ENCODE measurements at regions of chr5 and their contacts with region 1.

Region 1: DNA sequence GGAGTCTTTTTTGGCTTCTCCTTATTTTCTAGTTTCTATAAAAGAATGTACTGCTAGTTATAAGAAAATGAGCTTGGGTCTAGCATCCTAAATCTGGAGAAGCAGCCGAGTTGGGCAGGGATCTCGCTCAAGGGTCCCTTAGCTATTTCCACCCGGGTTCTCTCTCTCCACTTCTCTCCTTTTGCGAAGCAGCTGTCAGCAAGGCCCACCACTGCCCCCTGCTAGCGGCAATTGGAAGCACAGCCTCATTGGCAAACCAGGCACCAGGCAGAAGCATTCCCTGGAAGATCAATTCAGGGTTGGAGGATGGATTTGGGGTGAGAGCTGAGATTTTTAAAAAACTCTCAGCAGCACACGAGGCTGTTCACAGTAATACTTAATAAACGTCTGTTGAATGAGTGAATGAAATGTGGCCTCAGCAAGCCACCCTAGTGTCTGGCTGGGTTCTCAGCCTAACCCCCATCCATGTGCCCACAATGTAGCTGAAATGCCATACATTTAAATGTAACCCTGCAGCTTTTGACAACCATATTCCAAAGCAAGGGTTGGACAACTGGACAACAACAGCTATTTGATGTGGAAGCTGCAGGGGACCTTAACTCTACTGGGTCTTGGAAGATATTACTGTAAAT is 34.6 kb upstream of the TNIP1 start:
- DNase-seq: peak; percentile 84
- ATAC-seq: peak; percentile 76
- H3K4me3 Mint-ChIP-seq: no peak overlapping the region
- H3K27ac Mint-ChIP-seq: peak overlapping the region; percentile 24
- H3K4me1 Mint-ChIP-seq: peaks cover 2% of the 10 kb centered on the region
- H3K27me3 Mint-ChIP-seq: no peaks in the 10 kb centered on the region

Region 2: DNA sequence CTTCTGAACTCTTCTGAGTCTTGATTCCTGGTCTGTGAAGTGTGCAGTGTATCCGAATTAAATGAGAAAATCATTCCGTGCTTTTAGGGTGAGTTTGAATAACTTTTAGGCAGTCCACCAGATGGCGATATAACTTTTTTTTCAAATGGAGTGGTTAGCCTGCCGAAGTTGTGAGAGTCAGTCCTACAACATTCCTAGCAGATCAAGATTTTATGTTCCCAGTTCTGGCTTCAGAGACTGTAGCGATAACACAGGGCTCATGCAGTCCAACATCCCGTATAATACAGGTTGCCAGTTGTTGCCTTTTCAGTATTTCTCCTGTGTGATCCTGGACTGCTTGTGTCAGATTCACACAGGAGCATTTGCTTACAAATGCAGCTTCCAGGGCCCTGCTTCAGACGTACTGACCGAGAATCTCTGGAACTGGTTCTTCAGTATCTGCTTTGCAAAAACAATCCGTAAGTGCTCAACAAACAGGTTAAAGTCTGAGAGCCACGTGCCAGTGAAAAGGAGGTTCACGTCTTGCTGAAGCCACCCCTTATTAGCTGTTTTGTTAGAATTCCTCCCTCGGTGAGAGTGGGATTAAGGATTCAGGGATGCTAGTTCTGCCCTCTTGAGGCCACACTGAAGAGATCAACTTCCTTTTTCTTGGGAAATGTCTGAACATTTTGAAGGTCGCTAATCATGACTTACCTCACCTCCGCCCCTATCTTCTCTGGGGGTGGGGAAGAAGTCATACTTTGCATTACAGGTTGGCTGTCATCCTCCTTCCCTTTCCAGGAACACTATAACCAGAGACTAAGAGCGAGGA is 314.1 kb before region 1 on chr5:
- CTCF ChIA-PET with region 1: interaction called, 9 read pairs
- POLR2A ChIA-PET with region 1: no interaction called
- intact Hi-C with region 1: loop called in 1 of 2 experiments (anchors 2 kb)
- DNase-seq: peak; percentile 26
- ATAC-seq: peak; percentile 78
- H3K4me3 Mint-ChIP-seq: no peak overlapping the region
- H3K27ac Mint-ChIP-seq: no peak overlapping the region
- H3K4me1 Mint-ChIP-seq: peaks cover 22% of the 10 kb centered on the region
- H3K27me3 Mint-ChIP-seq: no peaks in the 10 kb centered on the region

Region 3: GRCh38 chr5:150912312-150912814 is 203.0 kb before region 1 on chr5:
- CTCF ChIA-PET with region 1: no interaction called
- POLR2A ChIA-PET with region 1: no interaction called
- intact Hi-C with region 1: no loop called
- DNase-seq: no peak
- ATAC-seq: no peak
- H3K4me3 Mint-ChIP-seq: no peak overlapping the region
- H3K27ac Mint-ChIP-seq: no peak overlapping the region
- H3K4me1 Mint-ChIP-seq: no peaks in the 10 kb centered on the region
- H3K27me3 Mint-ChIP-seq: peaks cover 7% of the 10 kb centered on the region

Region 4: DNA sequence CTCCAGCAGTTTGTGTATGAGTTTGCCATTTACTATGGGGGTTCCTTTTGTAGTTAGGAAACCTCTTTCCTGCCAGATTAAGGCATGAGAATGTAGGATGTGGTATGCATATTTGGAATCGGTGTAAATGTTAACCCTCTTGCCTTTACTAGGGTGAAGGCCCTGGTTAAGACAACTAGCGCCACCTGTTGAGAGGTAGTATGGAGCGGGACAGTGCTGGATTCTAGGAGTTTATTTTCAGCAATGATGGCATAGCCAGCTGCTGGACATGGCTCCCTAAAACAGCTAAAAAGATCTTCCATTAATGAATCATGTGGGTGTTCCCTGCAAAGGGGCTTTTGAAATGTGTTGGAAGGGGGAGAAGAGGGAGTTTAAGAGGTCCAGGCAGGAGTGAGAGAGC is 125.7 kb before region 1 on chr5:
- CTCF ChIA-PET with region 1: no interaction called
- POLR2A ChIA-PET with region 1: no interaction called
- intact Hi-C with region 1: no loop called
- DNase-seq: peak; percentile 46
- ATAC-seq: peak; percentile 74
- H3K4me3 Mint-ChIP-seq: no peak overlapping the region
- H3K27ac Mint-ChIP-seq: no peak overlapping the region
- H3K4me1 Mint-ChIP-seq: no peaks in the 10 kb centered on the region
- H3K27me3 Mint-ChIP-seq: no peaks in the 10 kb centered on the region

Region 5: GRCh38 chr5:151051066-151051930 is 64.1 kb before region 1 on chr5:
- CTCF ChIA-PET with region 1: interaction called, 234 read pairs
- POLR2A ChIA-PET with region 1: no interaction called
- intact Hi-C with region 1: loop called (anchors 1 kb)
- DNase-seq: peak; percentile 82
- ATAC-seq: peak; percentile 84
- H3K4me3 Mint-ChIP-seq: no peak overlapping the region
- H3K27ac Mint-ChIP-seq: no peak overlapping the region
- H3K4me1 Mint-ChIP-seq: peaks cover 5% of the 10 kb centered on the region
- H3K27me3 Mint-ChIP-seq: no peaks in the 10 kb centered on the region

Region 6: GRCh38 chr5:151080623-151081430 is 34.6 kb before region 1 on chr5 and contains the start of gene TNIP1:
- CTCF ChIA-PET with region 1: interaction called, 37 read pairs
- POLR2A ChIA-PET with region 1: no interaction called
- intact Hi-C with region 1: loop called in 1 of 2 experiments (anchors 2 kb)
- DNase-seq: peak; percentile 96
- ATAC-seq: peak; percentile 67
- H3K4me3 Mint-ChIP-seq: peak within 1 kb of the TSS; percentile 80
- H3K27ac Mint-ChIP-seq: peak within 1 kb of the TSS; percentile 91
- H3K4me1 Mint-ChIP-seq: peaks cover 74% of the 10 kb centered on the region
- H3K27me3 Mint-ChIP-seq: no peaks in the 10 kb centered on the region
- total RNA-seq, gene TNIP1: 351 to 408 TPM

Region 7: GRCh38 chr5:151104795-151105194 is 10.6 kb before region 1 on chr5:
- CTCF ChIA-PET with region 1: interaction called, 74 read pairs
- POLR2A ChIA-PET with region 1: no interaction called
- intact Hi-C with region 1: no loop called
- DNase-seq: no peak
- ATAC-seq: no peak
- H3K4me3 Mint-ChIP-seq: no peak overlapping the region
- H3K27ac Mint-ChIP-seq: no peak overlapping the region
- H3K4me1 Mint-ChIP-seq: no peaks in the 10 kb centered on the region
- H3K27me3 Mint-ChIP-seq: no peaks in the 10 kb centered on the region

Region 8: GRCh38 chr5:151150471-151151262 is 35.3 kb after region 1 on chr5:
- CTCF ChIA-PET with region 1: interaction called, 18 read pairs
- POLR2A ChIA-PET with region 1: interaction called, 3 read pairs
- intact Hi-C with region 1: no loop called
- DNase-seq: peak; percentile 87
- ATAC-seq: peak; percentile 64
- H3K4me3 Mint-ChIP-seq: peak overlapping the region; percentile 46
- H3K27ac Mint-ChIP-seq: peak overlapping the region; percentile 89
- H3K4me1 Mint-ChIP-seq: peaks cover 94% of the 10 kb centered on the region
- H3K27me3 Mint-ChIP-seq: no peaks in the 10 kb centered on the region

Region 9: GRCh38 chr5:151239237-151239861 is 124.0 kb after region 1 on chr5:
- CTCF ChIA-PET with region 1: interaction called, 18 read pairs
- POLR2A ChIA-PET with region 1: no interaction called
- intact Hi-C with region 1: no loop called
- DNase-seq: peak; percentile 82
- ATAC-seq: peak; percentile 71
- H3K4me3 Mint-ChIP-seq: no peak overlapping the region
- H3K27ac Mint-ChIP-seq: no peak overlapping the region
- H3K4me1 Mint-ChIP-seq: peaks cover 29% of the 10 kb centered on the region
- H3K27me3 Mint-ChIP-seq: no peaks in the 10 kb centered on the region

Region 10: GRCh38 chr5:151338734-151339133 is 223.3 kb after region 1 on chr5:
- CTCF ChIA-PET with region 1: no interaction called
- POLR2A ChIA-PET with region 1: no interaction called
- intact Hi-C with region 1: no loop called
- DNase-seq: no peak
- ATAC-seq: no peak
- H3K4me3 Mint-ChIP-seq: no peak overlapping the region
- H3K27ac Mint-ChIP-seq: no peak overlapping the region
- H3K4me1 Mint-ChIP-seq: no peaks in the 10 kb centered on the region
- H3K27me3 Mint-ChIP-seq: peaks cover 26% of the 10 kb centered on the region

Region 11: GRCh38 chr5:152271420-152271819 is 1156.0 kb after region 1 on chr5:
- CTCF ChIA-PET with region 1: no interaction called
- POLR2A ChIA-PET with region 1: no interaction called
- intact Hi-C with region 1: no loop called
- DNase-seq: peak; percentile 8
- ATAC-seq: no peak
- H3K4me3 Mint-ChIP-seq: no peak overlapping the region
- H3K27ac Mint-ChIP-seq: no peak overlapping the region
- H3K4me1 Mint-ChIP-seq: no peaks in the 10 kb centered on the region
- H3K27me3 Mint-ChIP-seq: no peaks in the 10 kb centered on the region

Measured in activated CD4-positive, alpha-beta T cell treated with anti-CD3 and anti-CD28 coated beads for 36 hours (primary cell).